ENCODE measurements at regions of chr19 and their contacts with region 1.

Region 1: DNA sequence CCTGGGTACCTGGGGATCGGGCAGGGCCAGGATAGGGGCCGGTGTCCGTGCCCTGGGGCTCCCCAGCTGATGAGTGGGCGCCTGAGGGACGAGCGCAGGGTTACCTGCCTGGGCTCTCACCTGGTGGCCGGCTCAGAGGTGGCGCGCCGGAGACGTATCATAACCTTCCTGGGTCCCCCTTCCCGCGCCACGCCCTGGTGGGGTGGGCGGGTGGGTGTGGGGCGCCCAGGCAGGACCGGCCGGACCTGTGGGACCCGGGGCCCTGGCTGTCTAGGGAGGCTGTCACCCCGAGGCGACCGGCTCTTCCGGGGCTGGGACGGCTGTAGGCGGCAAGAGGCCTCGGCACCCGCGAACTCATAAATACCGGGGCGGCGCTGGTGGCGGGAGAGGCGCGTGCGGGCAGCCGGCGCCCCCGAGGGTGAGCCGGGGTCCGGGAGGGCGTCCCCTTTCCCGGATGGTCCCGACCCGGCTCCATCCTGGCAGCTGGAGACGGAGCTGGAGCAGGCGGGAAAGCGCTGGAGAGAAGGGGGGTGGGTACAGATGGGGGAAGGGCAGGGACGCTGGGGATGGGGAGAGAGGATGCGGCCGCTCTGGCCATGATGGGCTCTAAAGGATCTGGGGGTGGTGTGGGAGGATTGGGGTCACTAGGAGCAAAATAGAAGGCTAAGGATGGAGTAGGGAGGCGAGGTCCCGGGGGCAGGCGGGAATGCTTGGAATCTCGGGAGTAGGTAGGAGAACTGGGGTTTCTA is at the start of gene ACP7:
- H3K4me3 ChIP-seq: no peak within 1 kb of the TSS
- H3K27ac ChIP-seq: no peak within 1 kb of the TSS
- H3K4me1 ChIP-seq: peaks cover 5% of the 10 kb centered on the region; the same call in 1 of the 2 replicates
- CTCF ChIP-seq: no peak

Region 2: GRCh38 chr19:39070888-39071287 is 13.3 kb before region 1 on chr19:
- CTCF ChIA-PET with region 1: interaction called, 4 read pairs
- POLR2A ChIA-PET with region 1: interaction called, 10 read pairs
- H3K4me3 ChIP-seq: no peak overlapping the region
- H3K27ac ChIP-seq: no peak overlapping the region
- H3K4me1 ChIP-seq: no peaks in the 10 kb centered on the region
- CTCF ChIP-seq: no peak

Region 3: GRCh38 chr19:39146091-39146490 is 61.9 kb after region 1 on chr19:
- CTCF ChIA-PET with region 1: no interaction called
- POLR2A ChIA-PET with region 1: no interaction called
- H3K4me3 ChIP-seq: no peak overlapping the region
- H3K27ac ChIP-seq: no peak overlapping the region
- H3K4me1 ChIP-seq: peaks cover 9% of the 10 kb centered on the region
- CTCF ChIP-seq: no peak

Region 4: DNA sequence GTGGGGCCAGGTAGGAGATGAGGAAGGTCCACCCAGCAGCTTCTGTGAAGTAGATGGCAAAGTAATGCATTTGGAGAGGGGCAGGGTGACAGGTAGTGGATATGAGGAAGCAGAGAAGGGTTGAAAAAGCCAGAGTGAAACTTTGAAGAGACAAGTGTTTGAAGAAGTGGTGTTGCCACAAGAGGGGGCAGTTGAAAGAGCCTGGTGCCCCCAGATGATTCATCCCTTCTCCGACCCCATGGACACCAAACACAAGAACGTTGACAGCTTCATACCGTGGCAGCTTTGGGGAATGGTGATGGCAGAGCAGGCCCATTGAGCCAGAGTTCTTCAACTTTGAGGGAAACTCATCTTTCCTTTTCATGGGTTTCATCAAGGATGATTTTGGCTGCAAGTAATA is 140.8 kb after region 1 on chr19:
- CTCF ChIA-PET with region 1: no interaction called
- POLR2A ChIA-PET with region 1: no interaction called
- H3K4me3 ChIP-seq: no peak overlapping the region
- H3K27ac ChIP-seq: no peak overlapping the region
- H3K4me1 ChIP-seq: no peaks in the 10 kb centered on the region
- CTCF ChIP-seq: peak; percentile 57